Activated T-helper 1 cell treated with anti-CD3 and anti-CD28 coated beads, Interleukin-12 subunit alpha, Interleukin-12 subunit beta, Interleukin-2, Interleukin-4 antibody, amounts not matched to agents 30 ng/mL and 10 ng/mL and 1 ng/mL, durations not matched to agents 14 hours and 24 hours and 36 hours (primary cell): ENCODE measurements at regions of chr22 and their contacts with region 1.

Region 1: GRCh38 chr22:50691521-50691920 is 18.9 kb downstream of the SHANK3 start:
- DNase-seq: peak; percentile 17
- H3K4me3 Mint-ChIP-seq: no peak overlapping the region
- H3K27ac Mint-ChIP-seq: no peak overlapping the region
- H3K4me1 Mint-ChIP-seq: peaks cover 7% of the 10 kb centered on the region
- H3K27me3 Mint-ChIP-seq: peaks cover 11% of the 10 kb centered on the region

Region 2: DNA sequence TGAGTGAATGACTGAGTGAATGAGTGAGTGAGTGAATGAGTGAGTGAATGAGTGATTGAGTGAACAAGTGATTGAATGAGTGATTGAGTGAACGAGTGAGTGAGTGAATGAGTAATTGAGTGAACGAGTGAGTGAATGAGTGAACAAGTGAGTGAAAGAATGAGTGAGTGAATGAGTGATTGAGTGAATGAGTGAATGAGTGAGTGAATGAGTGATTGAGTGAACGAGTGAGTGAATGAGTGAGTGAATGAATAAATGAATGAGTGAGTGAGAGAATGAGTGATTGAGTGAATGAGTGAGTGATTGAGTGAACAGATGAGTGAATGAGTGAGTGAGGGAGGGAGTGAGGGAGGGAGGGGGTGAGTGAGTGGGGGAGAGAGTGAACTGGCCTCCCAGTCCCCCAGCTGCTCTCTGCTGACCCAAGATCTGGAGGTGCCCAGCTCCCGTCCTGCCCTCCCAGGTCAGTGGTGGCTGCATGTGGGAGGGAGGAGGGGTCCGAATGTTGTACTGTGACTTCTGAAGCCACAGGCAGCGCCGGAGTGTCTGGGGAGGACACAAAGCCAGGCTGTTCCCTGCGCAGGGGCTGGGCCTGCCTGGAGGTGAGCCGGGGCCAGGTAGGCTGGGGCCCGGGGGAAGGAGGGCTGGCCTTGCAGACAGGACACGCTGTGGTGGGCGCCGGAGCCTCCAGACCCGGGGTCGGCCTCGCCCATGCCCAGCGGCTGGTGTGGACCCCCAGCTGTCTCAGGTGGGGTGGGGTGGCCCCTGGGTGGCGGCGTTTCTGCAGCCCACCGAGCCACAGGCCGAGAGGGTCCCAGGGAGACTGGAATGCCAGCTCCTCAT is 748.7 kb before region 1 on chr22:
- intact Hi-C with region 1: no loop called
- DNase-seq: no peak
- H3K4me3 Mint-ChIP-seq: no peak overlapping the region
- H3K27ac Mint-ChIP-seq: no peak overlapping the region
- H3K4me1 Mint-ChIP-seq: peaks cover 5% of the 10 kb centered on the region
- H3K27me3 Mint-ChIP-seq: no peaks in the 10 kb centered on the region

Region 3: DNA sequence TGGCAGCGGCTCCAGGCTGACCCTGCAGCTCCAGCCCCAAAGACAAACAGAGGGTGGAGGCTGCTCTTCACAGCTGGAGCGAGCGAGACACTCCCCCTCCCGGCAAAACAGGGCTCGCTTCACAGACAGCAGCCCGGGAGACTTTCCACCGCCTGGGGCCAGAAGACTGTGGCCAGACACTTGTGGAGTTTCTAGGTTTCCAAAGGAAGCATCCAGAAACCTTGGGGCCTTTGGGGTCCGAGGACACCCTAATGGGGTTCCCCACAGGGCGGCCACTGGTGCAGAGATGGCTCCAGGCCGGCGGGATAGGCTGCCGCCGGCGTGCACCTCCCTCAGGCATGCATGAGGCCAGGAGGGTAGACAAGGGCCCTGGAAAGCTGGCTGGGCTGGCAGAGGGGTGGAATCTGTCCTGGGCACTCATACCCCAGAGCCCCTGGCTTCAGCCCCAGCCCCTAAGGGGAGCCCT is 678.8 kb before region 1 on chr22 and contains the start of gene IL17REL:
- intact Hi-C with region 1: no loop called
- DNase-seq: no peak
- H3K4me3 Mint-ChIP-seq: peak within 1 kb of the TSS; percentile 23
- H3K27ac Mint-ChIP-seq: peak within 1 kb of the TSS; percentile 11
- H3K4me1 Mint-ChIP-seq: peaks cover 17% of the 10 kb centered on the region
- H3K27me3 Mint-ChIP-seq: peaks cover 8% of the 10 kb centered on the region
- total RNA-seq, gene IL17REL: 0.05 TPM in 1 of 2 replicates, not detected in the other

Region 4: GRCh38 chr22:50537765-50538164 is 153.8 kb before region 1 on chr22:
- intact Hi-C with region 1: loop called (anchors 5 kb)
- DNase-seq: no peak
- H3K4me3 Mint-ChIP-seq: peak overlapping the region; percentile 41
- H3K27ac Mint-ChIP-seq: peak overlapping the region; percentile 97
- H3K4me1 Mint-ChIP-seq: peaks cover 84% of the 10 kb centered on the region
- H3K27me3 Mint-ChIP-seq: no peaks in the 10 kb centered on the region

Region 5: DNA sequence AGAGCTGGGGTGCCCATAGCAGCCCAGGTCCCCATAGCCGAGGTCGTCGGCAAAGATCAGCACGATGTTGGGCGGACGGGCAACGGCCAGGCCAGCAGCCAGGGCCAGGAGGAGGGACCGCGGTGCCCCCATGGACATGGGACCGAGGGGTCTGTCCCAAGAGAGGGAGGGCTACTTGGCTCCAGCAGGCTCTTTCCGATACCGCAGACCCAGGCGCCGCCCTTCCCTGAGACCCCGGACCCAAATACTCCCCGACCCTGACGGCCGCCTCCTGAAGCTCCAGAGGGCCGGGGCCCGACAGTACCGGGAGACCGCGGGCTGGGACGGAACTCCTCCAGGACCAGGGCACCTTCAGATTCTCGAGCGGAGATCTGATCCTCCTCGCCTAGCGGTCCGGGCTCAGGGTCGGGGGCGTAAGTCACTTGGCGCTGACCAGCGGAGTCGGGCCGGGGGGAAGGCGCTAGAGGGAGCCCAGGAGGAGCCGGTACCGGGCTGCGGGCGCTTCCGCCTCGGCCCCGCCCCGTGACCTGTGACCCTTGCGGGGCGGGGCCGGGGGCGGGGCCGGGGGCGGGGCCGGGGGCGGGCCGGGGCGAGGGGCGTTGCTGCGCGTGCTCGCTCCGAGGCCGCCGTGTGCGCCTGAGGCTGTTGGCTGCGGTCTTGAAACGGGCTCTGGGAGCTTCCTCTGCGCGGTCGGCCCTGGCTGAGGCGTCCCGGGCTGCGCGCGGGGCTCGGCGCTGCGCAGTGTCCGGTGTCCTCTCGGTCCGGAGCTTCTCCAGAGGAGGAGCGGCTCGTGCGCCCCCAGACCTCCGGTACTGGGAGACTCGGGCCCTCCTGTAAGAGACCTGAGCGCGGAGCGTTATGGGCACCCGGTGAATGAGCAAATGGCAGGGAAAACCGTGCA is 63.6 kb before region 1 on chr22 and contains the start of gene ARSA:
- intact Hi-C with region 1: loop called (anchors 2 kb)
- DNase-seq: peak; percentile 78
- H3K4me3 Mint-ChIP-seq: peak within 1 kb of the TSS; percentile 91
- H3K27ac Mint-ChIP-seq: peak within 1 kb of the TSS; percentile 52
- H3K4me1 Mint-ChIP-seq: peaks cover 16% of the 10 kb centered on the region
- H3K27me3 Mint-ChIP-seq: peaks cover 2% of the 10 kb centered on the region
- total RNA-seq, gene ARSA: 26.2 and 27.3 TPM in 2 replicates

Region 6: DNA sequence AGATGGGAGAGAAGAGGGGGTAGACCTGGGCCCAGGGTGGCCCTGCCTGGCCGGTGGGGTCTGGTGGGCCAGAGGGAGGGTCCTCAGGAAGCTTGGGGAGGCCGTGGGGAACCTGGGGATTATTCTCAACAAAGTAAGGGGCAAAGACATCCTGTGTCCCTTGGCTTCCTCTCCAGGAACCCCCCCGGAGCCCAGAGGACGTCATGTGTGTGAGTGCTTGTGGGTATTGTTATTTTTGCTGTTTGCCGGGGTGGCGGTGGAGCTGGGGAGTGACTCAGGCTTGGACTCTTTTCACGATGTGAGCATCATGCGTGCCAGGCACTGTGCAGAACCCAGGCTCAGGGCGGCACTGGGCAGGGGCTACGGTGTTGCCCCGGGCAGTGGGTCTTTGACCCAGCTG is 19.9 kb before region 1 on chr22:
- intact Hi-C with region 1: no loop called
- DNase-seq: no peak
- H3K4me3 Mint-ChIP-seq: no peak overlapping the region
- H3K27ac Mint-ChIP-seq: peak overlapping the region; percentile 37
- H3K4me1 Mint-ChIP-seq: peaks cover 5% of the 10 kb centered on the region
- H3K27me3 Mint-ChIP-seq: peaks cover 53% of the 10 kb centered on the region